Ascending aorta (tissue), 2 donors: ENCODE measurements at regions of chr6 and their contacts with region 1.

Region 1: GRCh38 chr6:118893807-118894424 is at the start of gene ASF1A:
- DNase-seq: peak; percentile 89 to 99
- H3K4me3 ChIP-seq: peak within 1 kb of the TSS; percentile 82 to 95
- H3K27ac ChIP-seq: peak within 1 kb of the TSS; percentile 93 to 97
- H3K4me1 ChIP-seq: peaks cover 0 to 20% of the 10 kb centered on the region in 2 donors
- H3K27me3 ChIP-seq: no peaks in the 10 kb centered on the region
- CTCF ChIP-seq: peak; percentile 37 to 64 (median 58)
- total RNA-seq, gene ASF1A: 6.8 TPM

Region 2: DNA sequence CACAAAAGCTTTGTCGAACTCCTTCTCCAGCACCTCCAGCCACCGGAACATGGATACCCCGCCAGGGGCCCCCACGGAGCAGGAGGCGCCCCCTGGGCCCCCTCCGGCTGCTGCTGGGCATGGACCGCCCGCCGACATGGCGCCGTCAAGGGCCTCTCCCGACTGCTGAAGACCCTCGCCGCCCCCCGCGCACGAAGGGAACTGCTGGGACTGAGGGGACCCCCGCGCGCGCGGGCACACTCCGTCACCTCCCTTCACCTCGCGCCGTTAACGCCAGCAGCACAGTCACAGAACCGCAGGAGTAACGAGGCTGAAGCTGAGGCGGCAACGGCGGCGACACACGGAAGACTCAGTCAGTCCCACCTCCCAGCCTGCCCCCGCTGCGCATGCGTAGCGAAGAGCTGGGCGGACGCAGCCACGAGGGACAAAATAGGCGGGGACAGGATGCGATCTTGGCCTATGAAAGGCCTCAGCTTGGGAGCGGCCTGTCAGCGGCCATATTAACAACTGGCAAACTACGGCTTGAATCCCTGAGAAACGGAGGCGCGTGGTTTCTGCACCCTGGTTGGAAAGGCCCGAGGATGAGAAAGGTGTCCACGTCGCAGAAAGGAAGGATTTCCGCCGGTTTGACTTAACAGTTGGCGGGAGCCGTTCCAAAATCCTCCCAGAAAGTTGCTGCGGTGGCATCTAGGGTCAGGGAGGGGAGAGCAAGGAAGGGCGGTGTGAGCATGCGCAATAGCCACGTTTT is 1291.6 kb before region 1 on chr6 and contains the start of gene GOPC:
- intact Hi-C with region 1: loop called (anchors 10 kb)
- DNase-seq: peak; percentile 91 to 98
- H3K4me3 ChIP-seq: peak within 1 kb of the TSS; percentile 93
- H3K27ac ChIP-seq: peak within 1 kb of the TSS; percentile 80 to 89
- H3K4me1 ChIP-seq: peaks cover 0 to 14% of the 10 kb centered on the region in 2 donors
- H3K27me3 ChIP-seq: no peaks in the 10 kb centered on the region
- CTCF ChIP-seq: peak; percentile 6 to 24 (median 9)
- total RNA-seq, gene GOPC: 12.5 TPM

Region 3: DNA sequence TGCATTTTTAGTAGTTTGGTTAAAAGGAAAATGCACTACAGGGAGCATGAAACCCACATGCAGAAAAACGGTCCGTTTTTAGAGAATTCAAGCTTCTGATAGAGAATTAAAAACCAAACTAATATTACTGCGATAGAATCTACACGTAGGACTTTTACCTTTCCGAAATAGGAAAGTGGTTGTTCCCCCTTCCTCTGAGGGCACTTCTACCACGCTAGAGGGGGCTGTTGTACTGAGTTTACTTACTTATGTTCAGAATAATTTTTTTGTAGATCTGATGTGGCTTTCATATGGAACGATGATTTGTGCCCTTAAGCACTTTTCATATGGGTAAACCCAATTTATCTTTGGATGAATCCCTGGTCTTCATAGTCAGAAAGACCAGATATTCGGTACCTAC is 610.1 kb before region 1 on chr6:
- intact Hi-C with region 1: loop called (anchors 10 kb)
- DNase-seq: peak in 1 of 2 donors; percentile 80
- H3K4me3 ChIP-seq: peak overlapping the region in 1 of 2 donors; percentile 35
- H3K27ac ChIP-seq: no peak overlapping the region
- H3K4me1 ChIP-seq: peaks cover 11 to 36% of the 10 kb centered on the region in 2 donors
- H3K27me3 ChIP-seq: no peaks in the 10 kb centered on the region
- CTCF ChIP-seq: peak; percentile 42 to 81 (median 71)

Region 4: GRCh38 chr6:118651282-118652050 is 242.4 kb before region 1 on chr6 and contains the start of gene CEP85L:
- intact Hi-C with region 1: loop called (anchors 1 kb)
- DNase-seq: peak; percentile 63 to 92
- H3K4me3 ChIP-seq: peak within 1 kb of the TSS; percentile 77 to 98
- H3K27ac ChIP-seq: peak within 1 kb of the TSS; percentile 91 to 99
- H3K4me1 ChIP-seq: peaks cover 0 to 11% of the 10 kb centered on the region in 2 donors
- H3K27me3 ChIP-seq: no peaks in the 10 kb centered on the region
- CTCF ChIP-seq: peak in 1 of 3 experiments; percentile 33
- total RNA-seq, gene CEP85L: 15.0 TPM

Region 5: DNA sequence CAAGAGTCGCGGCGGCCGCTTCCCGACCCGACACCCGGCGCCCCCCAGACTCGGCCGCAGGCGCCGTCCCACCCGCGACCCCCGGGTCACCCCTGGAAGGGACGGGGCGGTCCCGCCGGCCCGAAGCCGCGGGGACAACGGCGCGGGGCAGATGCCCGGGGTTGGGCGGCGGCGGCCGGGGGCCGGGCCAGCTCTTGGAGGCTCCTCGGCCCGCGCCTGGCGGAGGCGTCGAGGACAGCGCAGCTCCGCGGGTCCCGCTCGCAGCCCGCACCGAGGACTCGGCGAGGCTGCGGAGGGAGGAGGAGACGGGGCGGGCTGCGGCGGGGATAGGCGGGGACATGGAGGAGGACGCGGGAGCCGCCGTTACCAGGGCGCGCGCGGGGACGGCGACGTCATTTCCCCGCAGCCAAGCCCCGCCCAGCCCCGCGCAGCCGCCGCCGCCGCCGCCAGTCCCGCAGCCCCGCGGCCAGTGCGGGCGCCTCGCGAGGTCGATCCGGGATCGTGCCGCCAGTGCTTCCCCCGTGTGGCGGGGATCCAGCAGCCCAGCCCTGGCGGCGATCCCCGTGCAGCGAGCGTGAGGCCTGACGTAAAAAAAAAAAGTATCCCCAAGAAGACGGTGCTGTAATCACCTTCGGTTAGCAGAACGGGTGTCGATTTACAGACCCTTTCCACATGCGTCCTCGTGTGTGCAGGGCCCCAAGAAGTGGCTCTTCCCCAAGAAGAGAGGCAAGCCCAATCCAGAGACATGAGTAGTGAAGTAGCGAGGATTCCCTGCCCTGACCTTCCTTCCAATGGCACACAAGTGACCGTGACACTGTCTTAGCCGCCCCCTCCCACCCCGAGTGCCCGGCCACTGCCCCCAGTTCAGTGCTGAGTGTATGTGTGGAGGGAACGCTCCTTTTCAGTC is 184.7 kb after region 1 on chr6 and contains the start of gene FAM184A:
- intact Hi-C with region 1: loop called (anchors 2 kb)
- DNase-seq: peak in 1 of 2 donors; percentile 80
- H3K4me3 ChIP-seq: peak within 1 kb of the TSS; percentile 82 to 90
- H3K27ac ChIP-seq: peak within 1 kb of the TSS; percentile 59 to 66
- H3K4me1 ChIP-seq: no peaks in the 10 kb centered on the region
- H3K27me3 ChIP-seq: no peaks in the 10 kb centered on the region
- CTCF ChIP-seq: peak in 2 of 3 experiments; percentile 8 to 14
- total RNA-seq, gene FAM184A: 3.1 TPM

Region 6: GRCh38 chr6:119349323-119350042 is 455.6 kb after region 1 on chr6 and contains the start of gene MAN1A1:
- intact Hi-C with region 1: loop called (anchors 5 kb)
- DNase-seq: peak; percentile 58 to 94
- H3K4me3 ChIP-seq: peak within 1 kb of the TSS; percentile 97 to 98
- H3K27ac ChIP-seq: peak within 1 kb of the TSS; percentile 93 to 94
- H3K4me1 ChIP-seq: peaks cover 0 to 11% of the 10 kb centered on the region in 2 donors
- H3K27me3 ChIP-seq: no peaks in the 10 kb centered on the region
- CTCF ChIP-seq: peak in 2 of 3 experiments; percentile 6 to 15
- total RNA-seq, gene MAN1A1: 75.5 TPM